CD4-positive, alpha-beta memory T cell (primary cell): ENCODE measurements at regions of chr3 and their contacts with region 1.

Region 1: DNA sequence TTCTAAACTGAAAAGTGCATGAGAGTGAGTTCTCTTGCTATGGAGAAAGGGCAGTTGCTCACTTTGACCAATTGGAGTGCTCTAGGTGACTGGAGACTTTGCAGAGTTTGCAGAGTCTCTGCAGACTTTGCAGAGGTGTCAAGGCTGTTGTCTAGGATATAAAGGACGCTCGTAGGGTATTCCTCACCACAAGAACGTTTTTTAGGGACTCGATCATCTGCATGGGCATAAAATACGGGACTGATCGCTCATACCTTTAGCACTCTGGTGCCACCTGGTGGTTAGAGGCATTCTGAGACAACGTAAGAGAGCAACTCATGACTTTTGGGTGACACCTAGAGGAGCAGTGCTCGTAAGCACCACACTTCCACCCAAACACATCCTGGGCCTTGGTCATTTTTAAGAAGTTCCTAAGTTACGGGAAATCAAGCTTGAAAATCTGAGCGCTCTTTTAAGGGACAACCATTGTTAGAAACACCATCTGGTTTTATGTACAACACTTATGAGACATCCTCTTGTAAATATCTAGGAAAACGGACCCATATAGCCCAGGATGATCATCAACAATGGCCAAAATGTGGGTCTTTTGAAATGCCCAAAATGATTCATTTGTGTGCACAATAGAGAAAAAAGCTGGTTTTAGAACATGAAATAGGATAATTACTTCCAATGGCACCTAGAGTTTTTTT is 51.6 kb upstream of the XCR1 start:
- DNase-seq: peak; percentile 85 to 88 (median 86)
- H3K4me3 ChIP-seq: no peak overlapping the region
- H3K4me3 Mint-ChIP-seq: peak overlapping the region in 4 of 8 donors; percentile 3 to 70 (median 51)
- H3K27ac ChIP-seq: no peak overlapping the region
- H3K27ac Mint-ChIP-seq: peak overlapping the region in 2 of 7 donors; percentile 15 to 16
- H3K4me1 ChIP-seq: peaks cover 3% of the 10 kb centered on the region
- H3K4me1 Mint-ChIP-seq: peaks cover 6 to 9% (median 8%) of the 10 kb centered on the region in 4 donors
- H3K27me3 ChIP-seq: no peaks in the 10 kb centered on the region
- H3K27me3 Mint-ChIP-seq: no peaks in the 10 kb centered on the region

Region 2: GRCh38 chr3:45656575-45657363 is 422.1 kb before region 1 on chr3:
- CTCF ChIA-PET with region 1: interaction called, 10 read pairs
- POLR2A ChIA-PET with region 1: no interaction called
- intact Hi-C with region 1: no loop called
- DNase-seq: peak; percentile 78 to 87 (median 80)
- H3K4me3 ChIP-seq: no peak overlapping the region
- H3K4me3 Mint-ChIP-seq: no peak overlapping the region
- H3K27ac ChIP-seq: no peak overlapping the region
- H3K27ac Mint-ChIP-seq: peak overlapping the region in 2 of 7 donors; percentile 23 to 61
- H3K4me1 ChIP-seq: peaks cover 6% of the 10 kb centered on the region
- H3K4me1 Mint-ChIP-seq: peaks cover 13 to 23% (median 16%) of the 10 kb centered on the region in 4 donors
- H3K27me3 ChIP-seq: no peaks in the 10 kb centered on the region
- H3K27me3 Mint-ChIP-seq: no peaks in the 10 kb centered on the region

Region 3: DNA sequence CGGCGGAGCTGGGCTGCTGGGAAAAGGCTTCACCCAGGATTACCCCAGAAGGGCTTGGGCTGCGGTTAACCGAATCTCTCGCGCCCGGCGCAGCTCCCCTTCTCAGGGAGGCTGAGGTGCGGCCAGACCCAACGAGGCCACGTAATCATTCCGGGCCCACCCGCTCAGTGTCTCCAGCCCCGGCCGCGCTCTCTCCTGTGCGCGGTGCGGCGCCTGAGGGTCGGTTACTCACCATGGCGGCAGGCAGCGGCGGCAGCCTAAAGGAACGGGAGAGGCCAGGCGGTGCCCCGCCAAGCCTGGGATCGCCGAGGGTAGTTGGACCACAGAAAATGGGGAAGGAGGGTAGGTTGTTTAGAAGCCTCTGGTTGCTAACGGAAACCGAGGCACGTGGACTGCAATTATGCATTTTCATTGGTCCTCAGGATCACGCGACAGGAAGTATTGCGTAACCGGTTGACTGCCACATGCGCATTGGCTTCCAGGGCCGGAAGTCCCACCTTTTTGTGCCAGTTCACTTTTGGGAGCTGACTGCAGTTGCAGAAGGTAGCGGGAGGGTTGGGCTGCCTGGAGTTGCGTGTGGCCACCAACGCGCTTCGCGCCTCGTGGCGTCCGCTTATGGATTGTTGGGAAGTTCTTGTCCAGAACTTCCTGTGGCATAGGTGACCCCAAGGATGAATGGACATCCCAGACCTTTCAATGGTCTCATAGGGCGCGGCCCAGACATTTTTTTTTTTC is 236.9 kb before region 1 on chr3 and contains the start of gene LZTFL1:
- CTCF ChIA-PET with region 1: interaction called, 17 read pairs
- POLR2A ChIA-PET with region 1: interaction called, 3 read pairs
- intact Hi-C with region 1: loop called (anchors 5 kb)
- DNase-seq: peak; percentile 88 to 93 (median 91)
- H3K4me3 ChIP-seq: peak within 1 kb of the TSS; percentile 58 to 98
- H3K4me3 Mint-ChIP-seq: peak within 1 kb of the TSS; percentile 94 to 99 (median 95)
- H3K27ac ChIP-seq: peak within 1 kb of the TSS; percentile 70
- H3K27ac Mint-ChIP-seq: peak within 1 kb of the TSS; percentile 95 to 98 (median 97)
- H3K4me1 ChIP-seq: peaks cover 19% of the 10 kb centered on the region
- H3K4me1 Mint-ChIP-seq: peaks cover 11 to 30% (median 17%) of the 10 kb centered on the region in 4 donors
- H3K27me3 ChIP-seq: no peaks in the 10 kb centered on the region
- H3K27me3 Mint-ChIP-seq: no peaks in the 10 kb centered on the region
- total RNA-seq, gene LZTFL1: 7.1 to 10.0 TPM

Region 4: DNA sequence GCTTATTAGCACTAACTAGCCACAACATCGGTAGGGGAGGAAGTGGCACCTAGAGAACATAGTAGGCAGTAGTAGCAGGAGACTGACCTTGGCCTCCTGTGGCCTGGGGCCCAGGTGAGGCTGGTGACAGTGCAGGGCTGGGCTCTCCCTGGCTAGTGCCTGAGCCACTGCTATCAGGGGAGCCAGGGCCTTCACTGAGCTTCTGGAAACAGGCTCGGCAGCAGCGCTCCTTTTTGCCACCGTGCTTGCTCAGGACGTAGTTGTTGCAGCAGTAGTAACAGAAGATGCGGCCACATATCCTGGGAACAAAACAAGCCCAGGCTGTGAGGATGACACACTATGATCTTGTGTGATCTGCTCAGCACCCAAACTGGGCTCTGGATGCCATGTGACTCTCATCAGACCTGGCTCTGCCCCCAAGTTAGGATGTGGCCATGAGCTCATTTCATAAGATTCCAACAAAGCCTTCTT is 120.5 kb before region 1 on chr3:
- CTCF ChIA-PET with region 1: interaction called, 153 read pairs
- POLR2A ChIA-PET with region 1: no interaction called
- intact Hi-C with region 1: no loop called
- DNase-seq: no peak
- H3K4me3 ChIP-seq: no peak overlapping the region
- H3K4me3 Mint-ChIP-seq: peak overlapping the region in 1 of 8 donors; percentile 25
- H3K27ac ChIP-seq: peak overlapping the region; percentile 4
- H3K27ac Mint-ChIP-seq: peak overlapping the region in 4 of 7 donors; percentile 3 to 66 (median 26)
- H3K4me1 ChIP-seq: peaks cover 25% of the 10 kb centered on the region
- H3K4me1 Mint-ChIP-seq: peaks cover 8 to 55% (median 33%) of the 10 kb centered on the region in 4 donors
- H3K27me3 ChIP-seq: no peaks in the 10 kb centered on the region
- H3K27me3 Mint-ChIP-seq: no peaks in the 10 kb centered on the region

Region 5: GRCh38 chr3:45978006-45978761 is 100.7 kb before region 1 on chr3:
- CTCF ChIA-PET with region 1: interaction called, 65 read pairs
- POLR2A ChIA-PET with region 1: interaction called, 3 read pairs
- intact Hi-C with region 1: no loop called
- DNase-seq: peak; percentile 38 to 73 (median 48)
- H3K4me3 ChIP-seq: peak overlapping the region in 1 of 2 donors; percentile 2
- H3K4me3 Mint-ChIP-seq: peak overlapping the region in 7 of 8 donors; percentile 38 to 93 (median 79)
- H3K27ac ChIP-seq: peak overlapping the region; percentile 10
- H3K27ac Mint-ChIP-seq: peak overlapping the region; percentile 31 to 99 (median 90)
- H3K4me1 ChIP-seq: peaks cover 91% of the 10 kb centered on the region
- H3K4me1 Mint-ChIP-seq: peaks cover 50 to 96% (median 74%) of the 10 kb centered on the region in 4 donors
- H3K27me3 ChIP-seq: no peaks in the 10 kb centered on the region
- H3K27me3 Mint-ChIP-seq: no peaks in the 10 kb centered on the region

Region 6: GRCh38 chr3:46065294-46065721 is 13.5 kb before region 1 on chr3:
- CTCF ChIA-PET with region 1: interaction called, 116 read pairs
- POLR2A ChIA-PET with region 1: interaction called, 11 read pairs
- intact Hi-C with region 1: loop called (anchors 1 kb)
- DNase-seq: peak; percentile 88 to 99 (median 93)
- H3K4me3 ChIP-seq: no peak overlapping the region
- H3K4me3 Mint-ChIP-seq: peak overlapping the region; percentile 58 to 86 (median 78)
- H3K27ac ChIP-seq: peak overlapping the region; percentile 47
- H3K27ac Mint-ChIP-seq: peak overlapping the region; percentile 86 to 96 (median 94)
- H3K4me1 ChIP-seq: peaks cover 77% of the 10 kb centered on the region
- H3K4me1 Mint-ChIP-seq: peaks cover 52 to 88% (median 68%) of the 10 kb centered on the region in 4 donors
- H3K27me3 ChIP-seq: no peaks in the 10 kb centered on the region
- H3K27me3 Mint-ChIP-seq: no peaks in the 10 kb centered on the region

Region 7: GRCh38 chr3:46114324-46114989 is 35.6 kb after region 1 on chr3:
- CTCF ChIA-PET with region 1: no interaction called
- POLR2A ChIA-PET with region 1: no interaction called
- intact Hi-C with region 1: no loop called
- DNase-seq: no peak
- H3K4me3 ChIP-seq: no peak overlapping the region
- H3K4me3 Mint-ChIP-seq: no peak overlapping the region
- H3K27ac ChIP-seq: no peak overlapping the region
- H3K27ac Mint-ChIP-seq: no peak overlapping the region
- H3K4me1 ChIP-seq: peaks cover 4% of the 10 kb centered on the region
- H3K4me1 Mint-ChIP-seq: peaks cover 5 to 22% (median 10%) of the 10 kb centered on the region in 4 donors
- H3K27me3 ChIP-seq: no peaks in the 10 kb centered on the region
- H3K27me3 Mint-ChIP-seq: peaks cover 0 to 2% of the 10 kb centered on the region in 2 donors

Region 8: GRCh38 chr3:46349485-46350261 is 270.8 kb after region 1 on chr3:
- CTCF ChIA-PET with region 1: no interaction called
- POLR2A ChIA-PET with region 1: no interaction called
- intact Hi-C with region 1: no loop called
- DNase-seq: peak; percentile 37 to 57 (median 54)
- H3K4me3 ChIP-seq: no peak overlapping the region
- H3K4me3 Mint-ChIP-seq: peak overlapping the region; percentile 53 to 82 (median 71)
- H3K27ac ChIP-seq: peak overlapping the region; percentile 10
- H3K27ac Mint-ChIP-seq: peak overlapping the region; percentile 65 to 91 (median 88)
- H3K4me1 ChIP-seq: peaks cover 70% of the 10 kb centered on the region
- H3K4me1 Mint-ChIP-seq: peaks cover 49 to 78% (median 69%) of the 10 kb centered on the region in 4 donors
- H3K27me3 ChIP-seq: no peaks in the 10 kb centered on the region
- H3K27me3 Mint-ChIP-seq: no peaks in the 10 kb centered on the region

Region 9: GRCh38 chr3:46378426-46378942 is 299.6 kb after region 1 on chr3:
- CTCF ChIA-PET with region 1: interaction called, 267 read pairs
- POLR2A ChIA-PET with region 1: interaction called, 3 read pairs
- intact Hi-C with region 1: loop called (anchors 2 kb)
- DNase-seq: peak; percentile 49 to 55 (median 49)
- H3K4me3 ChIP-seq: no peak overlapping the region
- H3K4me3 Mint-ChIP-seq: peak overlapping the region in 1 of 8 donors; percentile 9
- H3K27ac ChIP-seq: no peak overlapping the region
- H3K27ac Mint-ChIP-seq: peak overlapping the region in 4 of 7 donors; percentile 17 to 55 (median 34)
- H3K4me1 ChIP-seq: peaks cover 52% of the 10 kb centered on the region
- H3K4me1 Mint-ChIP-seq: peaks cover 36 to 74% (median 53%) of the 10 kb centered on the region in 4 donors
- H3K27me3 ChIP-seq: no peaks in the 10 kb centered on the region
- H3K27me3 Mint-ChIP-seq: no peaks in the 10 kb centered on the region